ENCODE measurements at regions of chr17 and their contacts with region 1.

Region 1: GRCh38 chr17:17812211-17813057 is 24.4 kb downstream of the SREBF1 start:
- DNase-seq: peak; percentile 45 to 77 (median 62)
- ATAC-seq: peak; percentile 72
- H3K4me3 ChIP-seq: no peak overlapping the region
- H3K4me3 Mint-ChIP-seq: no peak overlapping the region
- H3K27ac ChIP-seq: no peak overlapping the region
- H3K27ac Mint-ChIP-seq: peak overlapping the region; percentile 30
- H3K4me1 ChIP-seq: peaks cover 9% of the 10 kb centered on the region
- H3K4me1 Mint-ChIP-seq: peaks cover 8% of the 10 kb centered on the region
- H3K27me3 ChIP-seq: no peaks in the 10 kb centered on the region
- H3K27me3 Mint-ChIP-seq: no peaks in the 10 kb centered on the region
- CTCF ChIP-seq: peak; percentile 100

Region 2: DNA sequence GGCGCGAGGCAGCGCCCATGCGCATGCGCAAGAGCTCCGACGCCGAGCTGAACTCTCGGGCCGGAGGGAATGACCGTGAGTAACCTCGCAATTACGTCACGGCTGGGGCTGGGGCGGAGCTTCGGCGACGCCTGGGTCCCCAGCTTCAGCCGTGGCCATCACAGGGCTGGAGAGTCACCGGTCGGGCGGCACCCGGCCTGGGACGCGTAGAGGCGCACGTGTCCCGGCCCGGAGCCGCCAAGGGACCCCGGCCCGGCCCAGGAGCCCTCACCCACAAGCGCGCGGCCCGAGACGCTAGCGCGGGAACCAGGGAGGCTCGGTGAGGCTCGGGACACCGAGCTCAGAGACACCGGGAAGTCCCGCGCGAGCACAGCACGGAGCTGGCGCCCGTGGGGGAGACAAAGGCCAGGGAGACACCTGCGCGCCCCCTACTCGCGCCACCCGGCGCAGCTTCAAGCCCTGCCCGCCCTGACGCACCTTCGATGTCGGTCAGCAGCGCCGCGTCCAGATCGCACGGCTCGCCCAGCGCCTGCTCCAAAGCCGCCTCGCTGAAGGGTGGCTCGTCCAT is 23.9 kb after region 1 on chr17:
- CTCF ChIA-PET with region 1: interaction called, 10 read pairs
- POLR2A ChIA-PET with region 1: interaction called, 5 read pairs
- intact Hi-C with region 1: loop called in 1 of 2 experiments (anchors 2 kb)
- DNase-seq: peak; percentile 94 to 99 (median 97)
- ATAC-seq: peak; percentile 74
- H3K4me3 ChIP-seq: peak overlapping the region; percentile 77
- H3K4me3 Mint-ChIP-seq: peak overlapping the region; percentile 94
- H3K27ac ChIP-seq: peak overlapping the region; percentile 96 to 97
- H3K27ac Mint-ChIP-seq: peak overlapping the region; percentile 98
- H3K4me1 ChIP-seq: peaks cover 82% of the 10 kb centered on the region
- H3K4me1 Mint-ChIP-seq: peaks cover 69% of the 10 kb centered on the region
- H3K27me3 ChIP-seq: no peaks in the 10 kb centered on the region
- H3K27me3 Mint-ChIP-seq: no peaks in the 10 kb centered on the region
- CTCF ChIP-seq: no peak

Region 3: DNA sequence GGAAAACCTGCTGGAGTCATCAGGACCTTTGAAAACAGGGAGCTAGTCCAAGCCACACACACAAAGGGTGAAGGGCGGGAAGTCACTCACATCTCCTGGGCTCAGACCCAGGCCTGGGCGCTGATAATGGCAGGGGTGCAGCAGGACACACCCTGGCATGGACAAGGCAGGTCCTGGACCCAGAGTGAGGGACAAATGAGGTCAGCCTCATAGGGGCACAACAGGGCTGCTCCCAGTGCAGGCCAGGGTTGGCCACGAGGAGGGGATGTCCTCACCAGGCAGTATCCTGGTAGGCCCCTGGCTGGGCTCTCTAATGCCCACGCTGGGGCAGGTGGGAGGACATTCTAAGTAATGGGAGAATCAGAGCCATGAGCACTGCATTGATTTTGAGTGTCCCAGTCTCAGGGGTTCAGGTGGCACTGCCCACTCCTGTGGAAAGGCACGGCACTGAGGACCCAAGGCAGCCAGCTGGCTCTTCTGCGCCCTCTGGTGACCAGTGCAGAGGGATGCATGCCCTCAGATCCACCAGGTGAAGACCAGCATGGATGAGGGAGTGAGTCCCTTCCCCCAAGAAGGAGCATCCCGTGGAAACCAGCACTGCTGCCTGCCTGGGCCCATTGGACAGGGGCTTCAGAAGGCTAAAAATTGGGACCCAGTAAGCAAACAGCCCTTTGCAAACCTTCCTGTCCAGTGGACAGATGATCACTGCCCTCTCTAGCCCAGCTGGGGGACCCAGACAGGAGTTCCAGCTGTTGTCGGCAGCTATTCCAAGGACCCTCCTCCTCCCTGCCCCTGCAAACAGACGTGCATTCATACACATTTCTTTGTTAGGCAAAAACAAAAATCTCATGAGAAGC is 47.7 kb after region 1 on chr17:
- CTCF ChIA-PET with region 1: interaction called, 27 read pairs
- POLR2A ChIA-PET with region 1: interaction called, 4 read pairs
- intact Hi-C with region 1: loop called (anchors 1 kb)
- DNase-seq: peak; percentile 53 to 86 (median 65)
- ATAC-seq: peak; percentile 97
- H3K4me3 ChIP-seq: no peak overlapping the region
- H3K4me3 Mint-ChIP-seq: no peak overlapping the region
- H3K27ac ChIP-seq: no peak overlapping the region
- H3K27ac Mint-ChIP-seq: no peak overlapping the region
- H3K4me1 ChIP-seq: peaks cover 29% of the 10 kb centered on the region
- H3K4me1 Mint-ChIP-seq: peaks cover 34% of the 10 kb centered on the region
- H3K27me3 ChIP-seq: no peaks in the 10 kb centered on the region
- H3K27me3 Mint-ChIP-seq: no peaks in the 10 kb centered on the region
- CTCF ChIP-seq: peak; percentile 97

Region 4: GRCh38 chr17:17919169-17920107 is 107.0 kb after region 1 on chr17:
- CTCF ChIA-PET with region 1: interaction called, 4 read pairs
- POLR2A ChIA-PET with region 1: no interaction called
- intact Hi-C with region 1: loop called (anchors 1 to 5 kb)
- DNase-seq: peak; percentile 44 to 81 (median 64)
- ATAC-seq: peak; percentile 99
- H3K4me3 ChIP-seq: no peak overlapping the region
- H3K4me3 Mint-ChIP-seq: no peak overlapping the region
- H3K27ac ChIP-seq: no peak overlapping the region
- H3K27ac Mint-ChIP-seq: no peak overlapping the region
- H3K4me1 ChIP-seq: peaks cover 9% of the 10 kb centered on the region
- H3K4me1 Mint-ChIP-seq: peaks cover 19% of the 10 kb centered on the region
- H3K27me3 ChIP-seq: no peaks in the 10 kb centered on the region
- H3K27me3 Mint-ChIP-seq: no peaks in the 10 kb centered on the region
- CTCF ChIP-seq: peak; percentile 59

Region 5: DNA sequence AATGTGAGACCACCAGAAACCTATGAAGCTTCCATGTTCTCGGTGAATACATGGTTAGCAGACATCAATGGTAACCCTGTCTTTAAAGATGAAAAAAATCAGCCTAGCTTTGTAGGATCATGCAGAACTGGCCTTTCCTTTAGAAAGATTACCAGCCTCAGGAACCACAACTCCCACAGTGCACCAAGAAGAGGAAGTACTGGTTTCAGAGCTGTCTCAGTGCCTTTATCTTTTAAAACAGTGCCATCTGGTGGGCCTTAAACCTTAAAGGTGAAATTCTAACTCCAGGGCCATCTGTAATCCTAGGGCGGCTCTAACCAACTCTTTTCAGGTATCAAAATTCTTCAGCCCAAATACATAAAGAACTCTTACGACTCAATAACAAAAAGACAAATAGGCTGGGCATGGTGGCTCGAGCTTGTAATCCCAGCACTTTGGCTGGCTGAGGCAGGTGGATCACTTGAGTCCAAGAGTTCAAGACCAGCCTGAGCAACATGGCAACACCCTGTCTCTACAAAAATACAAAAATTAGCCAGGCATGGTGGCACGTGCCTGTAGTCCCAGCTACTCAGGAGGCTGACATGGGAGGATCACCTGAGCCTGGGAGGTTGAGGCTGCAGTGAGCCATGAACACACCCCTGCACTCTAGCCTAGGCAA is 221.1 kb after region 1 on chr17:
- CTCF ChIA-PET with region 1: no interaction called
- POLR2A ChIA-PET with region 1: interaction called, 5 read pairs
- intact Hi-C with region 1: loop called in 1 of 2 experiments (anchors 2 kb)
- DNase-seq: peak in 11 of 14 experiments; percentile 11 to 87 (median 46)
- ATAC-seq: peak; percentile 98
- H3K4me3 ChIP-seq: no peak overlapping the region
- H3K4me3 Mint-ChIP-seq: peak overlapping the region; percentile 77
- H3K27ac ChIP-seq: no peak overlapping the region
- H3K27ac Mint-ChIP-seq: peak overlapping the region; percentile 60
- H3K4me1 ChIP-seq: peaks cover 28% of the 10 kb centered on the region
- H3K4me1 Mint-ChIP-seq: peaks cover 30% of the 10 kb centered on the region
- H3K27me3 ChIP-seq: no peaks in the 10 kb centered on the region
- H3K27me3 Mint-ChIP-seq: no peaks in the 10 kb centered on the region
- CTCF ChIP-seq: peak; percentile 69

Measured in CD4-positive, alpha-beta T cell (primary cell).